Activated CD4-positive, alpha-beta T cell treated with anti-CD3 and anti-CD28 coated beads, Interleukin-2, amount 10 ng/mL, durations not matched to agents 24 days and 14 days (primary cell): ENCODE measurements at regions of chr2 and their contacts with region 1.

Region 1: GRCh38 chr2:44184106-44184505 is 15.4 kb downstream of the PPM1B start:
- DNase-seq: peak; percentile 67
- H3K4me3 Mint-ChIP-seq: peak overlapping the region; percentile 53
- H3K27ac Mint-ChIP-seq: peak overlapping the region; percentile 64
- H3K4me1 Mint-ChIP-seq: peaks cover 47% of the 10 kb centered on the region
- H3K27me3 Mint-ChIP-seq: no peaks in the 10 kb centered on the region

Region 2: GRCh38 chr2:44218771-44219170 is 34.7 kb after region 1 on chr2:
- intact Hi-C with region 1: loop called (anchors 5 kb)
- DNase-seq: no peak
- H3K4me3 Mint-ChIP-seq: no peak overlapping the region
- H3K27ac Mint-ChIP-seq: no peak overlapping the region
- H3K4me1 Mint-ChIP-seq: peaks cover 4% of the 10 kb centered on the region
- H3K27me3 Mint-ChIP-seq: no peaks in the 10 kb centered on the region

Region 3: GRCh38 chr2:44420725-44421124 is 236.6 kb after region 1 on chr2:
- intact Hi-C with region 1: no loop called
- DNase-seq: no peak
- H3K4me3 Mint-ChIP-seq: no peak overlapping the region
- H3K27ac Mint-ChIP-seq: no peak overlapping the region
- H3K4me1 Mint-ChIP-seq: no peaks in the 10 kb centered on the region
- H3K27me3 Mint-ChIP-seq: no peaks in the 10 kb centered on the region